ENCODE measurements at regions of chr12 and their contacts with region 1.

Region 1: DNA sequence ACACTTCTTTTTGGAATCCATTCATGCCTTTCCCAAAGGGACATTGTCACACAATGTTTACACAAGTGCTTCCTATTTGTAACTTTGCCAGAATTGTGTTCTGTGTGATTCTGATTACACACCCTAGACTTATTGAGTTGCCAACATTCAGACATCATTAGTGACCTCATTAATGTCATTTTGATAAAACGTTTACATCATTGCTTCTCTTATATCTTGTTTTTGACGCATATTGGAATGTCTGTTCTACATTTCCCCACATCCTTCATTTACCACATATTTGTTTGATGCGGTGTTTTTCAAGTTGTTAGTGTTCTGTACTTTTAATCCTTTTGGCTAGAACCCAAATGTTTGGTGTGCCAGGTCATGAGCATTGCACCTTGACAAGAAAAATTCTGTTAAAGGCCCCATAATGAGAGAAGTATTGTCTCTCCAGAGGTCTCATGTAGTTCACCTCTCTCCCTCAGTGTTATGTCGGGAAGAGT is 305.5 kb downstream of the AEBP2 start:
- DNase-seq: no peak
- H3K4me3 ChIP-seq: no peak overlapping the region
- H3K27ac ChIP-seq: no peak overlapping the region
- H3K4me1 ChIP-seq: peaks cover 7% of the 10 kb centered on the region
- H3K27me3 ChIP-seq: no peaks in the 10 kb centered on the region
- CTCF ChIP-seq: no peak
- POLR2A ChIP-seq: no peak

Region 2: GRCh38 chr12:19058235-19059021 is 686.3 kb before region 1 on chr12:
- intact Hi-C with region 1: no loop called
- DNase-seq: no peak
- H3K4me3 ChIP-seq: no peak overlapping the region
- H3K27ac ChIP-seq: no peak overlapping the region
- H3K4me1 ChIP-seq: no peaks in the 10 kb centered on the region
- H3K27me3 ChIP-seq: no peaks in the 10 kb centered on the region
- CTCF ChIP-seq: no peak
- POLR2A ChIP-seq: no peak

Region 3: DNA sequence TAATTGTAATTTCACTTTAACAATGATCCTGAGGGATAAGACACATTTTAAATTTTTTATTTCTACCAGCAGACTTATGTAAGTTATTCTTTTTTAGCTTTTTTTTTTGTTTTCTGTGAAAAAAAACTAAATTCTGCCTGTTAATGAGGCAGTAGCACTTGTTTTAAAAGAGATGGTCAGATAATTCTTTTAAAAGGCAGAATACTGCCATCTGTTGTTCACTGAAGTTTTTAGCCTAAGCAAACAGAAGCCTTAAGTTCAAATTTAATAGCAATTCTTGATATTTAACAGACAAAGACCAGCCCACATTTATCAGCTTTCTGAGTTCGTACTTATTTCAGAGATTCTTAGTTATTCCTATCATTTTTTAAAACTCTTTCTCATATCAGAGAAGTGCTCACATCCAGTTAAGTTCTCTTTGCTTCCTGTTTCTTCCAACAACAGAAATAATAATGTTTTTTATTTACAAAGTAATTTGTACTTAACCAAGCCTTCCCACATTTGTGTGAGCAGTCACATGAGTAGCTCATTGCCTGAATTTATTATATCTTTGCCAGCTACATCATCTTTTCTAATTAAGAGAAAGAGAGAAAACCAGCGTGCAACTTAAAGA is 857.0 kb after region 1 on chr12:
- intact Hi-C with region 1: loop called (anchors 10 kb)
- DNase-seq: no peak
- H3K4me3 ChIP-seq: no peak overlapping the region
- H3K27ac ChIP-seq: no peak overlapping the region
- H3K4me1 ChIP-seq: no peaks in the 10 kb centered on the region
- H3K27me3 ChIP-seq: no peaks in the 10 kb centered on the region
- CTCF ChIP-seq: peak in 3 of 4 experiments; percentile 36 to 54 (median 38)
- POLR2A ChIP-seq: no peak

Region 4: DNA sequence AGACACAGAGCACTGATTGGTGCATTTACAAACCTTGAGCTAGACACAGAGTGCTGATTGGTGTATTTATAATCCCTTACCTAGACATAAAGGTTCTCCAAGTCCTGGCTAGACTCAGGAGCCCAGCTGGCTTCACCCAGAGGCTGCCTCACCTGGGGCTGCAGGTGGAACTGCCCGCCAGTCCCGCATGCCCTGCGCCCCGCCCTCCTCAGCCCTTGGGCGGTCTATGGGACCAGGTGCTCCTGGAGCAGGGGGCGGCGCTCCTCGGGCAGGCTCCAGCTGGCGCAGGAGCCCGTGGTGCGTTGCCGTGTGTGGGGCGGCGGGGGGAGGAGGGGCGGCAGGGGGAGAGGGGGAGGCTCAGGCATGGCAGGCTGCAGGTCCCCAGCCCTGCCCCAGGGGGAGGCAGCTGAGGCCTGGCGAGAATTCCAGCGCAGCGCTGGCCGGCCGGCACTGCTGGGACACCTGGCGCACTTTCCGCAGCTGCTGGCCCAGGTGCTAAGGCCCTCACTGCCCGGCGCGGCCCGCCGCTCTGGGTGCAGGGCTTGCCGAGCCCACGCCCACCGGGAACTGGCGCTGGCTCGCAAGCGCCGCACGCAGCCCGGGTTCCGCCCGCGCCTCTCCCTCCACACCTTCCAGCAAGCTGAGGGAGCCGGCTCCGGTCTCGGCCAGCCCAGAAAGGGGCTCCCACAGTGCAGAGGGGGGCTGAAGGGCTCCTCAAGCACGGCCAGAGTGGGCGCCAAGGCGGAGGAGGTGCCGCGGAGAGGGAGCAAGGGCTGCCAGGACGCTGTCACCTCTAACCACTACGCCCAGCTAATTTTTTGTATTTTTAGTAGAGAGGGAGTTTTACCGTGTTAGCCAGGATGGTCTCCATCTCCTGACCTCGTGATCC is 1062.7 kb after region 1 on chr12:
- intact Hi-C with region 1: loop called (anchors 10 kb)
- DNase-seq: no peak
- H3K4me3 ChIP-seq: no peak overlapping the region
- H3K27ac ChIP-seq: no peak overlapping the region
- H3K4me1 ChIP-seq: no peaks in the 10 kb centered on the region
- H3K27me3 ChIP-seq: no peaks in the 10 kb centered on the region
- CTCF ChIP-seq: no peak
- POLR2A ChIP-seq: no peak

Measured in prostate gland (tissue), 2 donors.